Posterior cingulate gyrus (tissue), 11 donors: ENCODE measurements at regions of chr11 and their contacts with region 1.

Region 1: GRCh38 chr11:2363577-2364370 is 13.3 kb upstream of the CD81 start:
- DNase-seq: peak in 2 of 10 donors; percentile 70 to 73

Region 2: DNA sequence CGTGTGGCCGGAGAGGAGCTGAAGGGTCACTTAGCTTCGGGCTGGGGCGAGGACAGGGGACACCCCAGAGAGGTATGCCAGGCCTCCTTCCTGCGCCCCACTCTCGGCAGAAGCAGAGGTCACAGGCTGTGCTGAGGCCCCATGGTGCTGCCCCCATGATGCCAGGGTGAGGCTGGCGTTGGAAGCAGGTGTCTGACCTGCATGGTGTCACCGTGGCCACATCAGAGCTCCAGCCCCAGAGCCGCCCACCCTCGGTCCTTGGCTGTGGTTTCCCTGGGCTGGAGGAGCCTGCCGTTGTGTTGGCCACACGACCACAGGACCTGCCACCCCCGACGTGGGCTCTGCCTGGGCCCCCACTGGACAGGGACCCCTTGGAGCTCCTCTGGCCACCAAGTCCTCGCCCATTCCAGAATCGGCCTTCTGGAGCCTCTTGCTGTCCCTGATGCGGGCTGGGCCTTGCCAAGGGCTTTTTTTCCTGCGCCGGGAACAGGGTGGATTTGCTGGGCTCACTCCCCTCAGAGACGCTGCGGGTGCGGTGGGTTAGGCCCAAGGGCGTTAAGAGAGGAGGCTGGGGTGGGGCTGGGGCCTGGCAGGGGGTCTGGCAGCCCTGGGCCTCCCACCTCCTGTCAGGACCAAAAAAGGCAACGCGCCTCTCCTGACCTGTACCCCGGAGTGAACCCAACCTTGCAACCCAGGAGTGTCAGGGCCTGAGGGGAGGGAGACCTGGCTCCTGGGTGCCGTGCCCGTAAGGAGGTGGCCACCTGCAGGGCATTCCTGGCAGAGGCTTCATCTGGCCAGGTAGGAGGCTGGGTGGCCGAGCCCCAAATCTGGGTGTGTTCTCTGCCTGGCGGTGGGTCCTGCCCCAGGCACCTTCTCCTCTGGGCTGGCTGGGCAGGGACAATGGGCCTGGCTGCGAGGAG is 28.7 kb after region 1 on chr11:
- intact Hi-C with region 1: loop called (anchors 1 kb)
- DNase-seq: no peak